Mucosa of descending colon (tissue), 3 donors: ENCODE measurements at regions of chr3 and their contacts with region 1.

Region 1: GRCh38 chr3:39447637-39448483 is 19.6 kb upstream of the MOBP start:
- DNase-seq: peak in 2 of 3 donors; percentile 51 to 96
- ATAC-seq: peak; percentile 86
- H3K4me3 ChIP-seq: no peak overlapping the region
- H3K4me1 ChIP-seq: peaks cover 11% of the 10 kb centered on the region
- CTCF ChIP-seq: peak; percentile 78

Region 2: DNA sequence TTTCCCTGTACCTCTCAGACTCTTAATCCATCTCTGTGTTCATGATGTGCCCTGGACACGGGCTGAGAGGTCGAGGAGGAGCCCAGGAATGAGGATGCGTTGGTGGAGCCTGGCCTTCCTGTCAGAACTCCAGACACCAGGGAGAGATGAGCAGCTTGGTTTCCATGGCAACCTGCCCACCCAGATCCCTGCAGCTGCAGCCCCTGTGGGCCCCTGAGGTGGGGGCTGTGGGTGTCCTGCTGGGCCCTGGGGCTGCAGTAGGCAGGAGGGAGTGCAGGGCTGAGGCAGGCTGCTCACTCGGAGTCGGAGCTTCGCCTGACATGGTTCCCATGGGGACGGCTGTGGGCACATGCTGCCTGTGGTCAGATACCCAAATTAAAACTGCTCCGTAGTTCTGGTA is 624.1 kb before region 1 on chr3:
- intact Hi-C with region 1: no loop called
- DNase-seq: no peak
- ATAC-seq: no peak
- H3K4me3 ChIP-seq: no peak overlapping the region
- H3K4me1 ChIP-seq: no peaks in the 10 kb centered on the region
- CTCF ChIP-seq: no peak

Region 3: GRCh38 chr3:39279745-39280517 is 167.9 kb before region 1 on chr3 and contains the start of gene CX3CR1:
- intact Hi-C with region 1: no loop called
- DNase-seq: no peak
- ATAC-seq: no peak
- H3K4me3 ChIP-seq: no peak within 1 kb of the TSS
- H3K4me1 ChIP-seq: no peaks in the 10 kb centered on the region
- CTCF ChIP-seq: no peak
- total RNA-seq, gene CX3CR1: 0.67 to 0.94 (median 0.70) TPM

Region 4: DNA sequence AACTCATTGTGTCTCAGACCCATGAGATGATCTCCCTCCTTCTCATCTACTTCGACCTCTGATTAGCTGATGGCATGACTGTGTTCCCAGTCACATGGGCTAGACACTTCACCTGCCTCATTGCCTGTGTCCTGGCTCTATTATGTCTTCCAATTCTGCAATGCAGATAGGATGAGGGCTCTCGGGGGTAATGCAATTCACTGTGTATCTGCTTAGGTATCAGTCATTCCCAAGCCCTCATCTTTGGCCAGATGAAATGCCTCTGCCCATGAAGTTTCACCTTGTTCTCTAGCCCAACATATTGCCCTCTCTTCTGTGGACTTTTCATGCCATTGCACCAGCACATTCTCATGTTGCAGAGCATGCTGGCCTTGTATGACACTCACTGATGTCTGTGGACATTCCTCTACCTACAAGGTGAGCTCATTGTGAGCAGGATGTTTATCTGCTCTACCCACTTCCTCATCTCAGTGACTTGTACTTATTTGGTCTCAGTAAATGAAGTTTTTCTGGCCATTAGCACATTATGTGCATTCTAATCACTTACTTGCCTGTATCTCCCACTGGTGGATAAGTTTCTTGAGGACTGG is 51.9 kb after region 1 on chr3:
- intact Hi-C with region 1: loop called (anchors 5 to 10 kb)
- DNase-seq: no peak
- ATAC-seq: peak; percentile 17
- H3K4me3 ChIP-seq: no peak overlapping the region
- H3K4me1 ChIP-seq: no peaks in the 10 kb centered on the region
- CTCF ChIP-seq: no peak